Thyroid gland (tissue), 4 donors: ENCODE measurements at regions of chr14 and their contacts with region 1.

Region 1: DNA sequence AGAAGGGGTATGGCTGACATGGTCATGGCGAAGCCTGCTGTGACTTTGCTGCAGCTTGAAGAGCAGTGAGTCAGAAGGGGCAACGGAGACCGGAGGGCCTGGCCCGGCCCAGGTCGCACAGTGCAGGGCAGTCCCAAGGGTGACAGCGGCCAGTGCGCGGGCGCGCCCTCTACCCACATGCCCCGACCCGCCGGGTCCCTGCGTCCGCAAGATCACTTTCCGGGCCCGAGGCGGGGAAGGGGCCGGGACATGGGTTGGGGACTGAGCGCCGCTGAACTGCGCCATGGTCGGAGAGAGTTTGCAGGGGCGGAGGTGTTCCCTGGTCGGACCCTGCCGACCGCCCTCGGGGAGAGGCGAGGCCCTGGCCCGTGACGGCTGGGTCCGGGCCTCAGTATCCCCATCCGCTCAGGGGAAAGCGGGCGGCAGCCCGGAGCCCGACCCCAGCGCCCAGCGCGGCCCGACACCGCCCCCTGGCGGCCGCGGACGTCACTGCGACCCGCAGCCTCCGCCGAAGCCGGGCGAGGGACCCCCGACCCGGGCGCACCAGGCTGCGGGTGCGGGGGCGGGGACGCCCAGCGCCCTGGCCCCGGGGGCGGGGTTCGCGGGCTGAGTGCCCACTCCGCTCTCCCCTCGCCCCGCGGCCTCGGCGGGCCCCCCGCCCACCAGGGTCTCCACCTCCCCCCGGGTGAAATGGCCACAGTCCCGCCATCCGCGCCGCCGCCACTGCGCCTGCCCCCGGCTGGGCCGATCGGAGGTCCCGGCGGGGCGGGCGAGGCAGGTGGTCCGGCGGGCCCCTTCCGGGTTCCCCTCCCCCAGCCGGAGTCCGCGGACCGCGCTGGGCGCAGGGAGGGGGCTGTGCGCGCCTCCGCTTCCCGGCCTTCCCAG is 7.2 kb upstream of the ANKRD9 start:
- DNase-seq: peak; percentile 48 to 50
- H3K4me3 ChIP-seq: peak overlapping the region; percentile 37 to 87 (median 85)
- H3K27ac ChIP-seq: peak overlapping the region in 2 of 3 donors; percentile 61 to 76
- H3K4me1 ChIP-seq: peaks cover 3% of the 10 kb centered on the region in 2 donors
- H3K27me3 ChIP-seq: no peaks in the 10 kb centered on the region
- CTCF ChIP-seq: peak in 5 of 6 experiments; percentile 72 to 100 (median 95)
- POLR2A ChIP-seq: no peak

Region 2: DNA sequence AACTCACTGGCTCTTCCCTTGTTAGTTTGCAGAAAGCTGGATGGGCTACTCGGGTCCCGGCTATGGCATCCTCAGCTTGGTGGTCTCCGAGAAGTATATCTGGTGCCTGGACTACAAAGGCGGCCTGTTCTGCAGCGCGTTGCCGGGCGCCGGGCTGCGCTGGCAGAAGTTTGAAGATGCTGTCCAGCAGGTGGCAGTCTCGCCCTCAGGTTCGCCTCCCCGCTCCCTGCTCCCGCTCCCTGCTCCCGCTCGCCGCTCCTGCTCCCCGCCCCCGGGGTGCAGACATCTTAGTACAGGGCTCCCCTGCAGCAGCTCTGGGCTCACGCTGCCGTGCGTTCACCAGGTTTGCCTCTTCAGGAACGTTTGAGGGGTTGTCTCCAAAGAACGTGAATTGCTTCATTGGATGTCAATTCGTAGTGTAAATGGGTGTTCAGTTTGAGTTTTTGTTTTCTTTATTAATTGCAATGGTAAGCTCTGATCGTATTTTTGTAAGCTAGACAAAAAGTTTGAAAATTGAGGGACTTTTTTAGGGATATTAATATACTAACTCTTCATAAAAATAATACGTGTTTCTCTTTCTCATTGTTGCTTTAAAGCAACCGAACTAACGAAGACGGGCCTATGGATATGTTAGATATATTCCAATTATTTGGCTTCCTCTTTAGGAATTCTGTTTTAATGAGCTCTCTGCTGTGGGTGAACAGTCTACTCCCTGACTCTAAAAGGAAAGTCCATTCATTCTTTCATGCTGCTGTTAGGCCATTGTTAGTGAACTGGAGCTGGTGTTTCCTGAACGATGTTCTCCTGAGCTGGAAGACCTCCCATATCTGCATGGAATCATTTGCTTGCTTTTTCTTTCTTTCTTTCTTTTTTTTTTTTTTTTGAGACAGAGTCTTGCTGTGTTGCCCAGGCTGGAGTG is 78.5 kb before region 1 on chr14:
- intact Hi-C with region 1: loop called (anchors 2 kb)
- DNase-seq: peak; percentile 87 to 89
- H3K4me3 ChIP-seq: no peak overlapping the region
- H3K27ac ChIP-seq: no peak overlapping the region
- H3K4me1 ChIP-seq: no peaks in the 10 kb centered on the region
- H3K27me3 ChIP-seq: no peaks in the 10 kb centered on the region
- CTCF ChIP-seq: peak; percentile 39 to 77 (median 73)
- POLR2A ChIP-seq: no peak

Region 3: GRCh38 chr14:102474934-102475333 is 41.8 kb before region 1 on chr14:
- intact Hi-C with region 1: no loop called
- DNase-seq: peak; percentile 95 to 97
- H3K4me3 ChIP-seq: no peak overlapping the region
- H3K27ac ChIP-seq: peak overlapping the region in 2 of 3 donors; percentile 19 to 23
- H3K4me1 ChIP-seq: peaks cover 11 to 32% of the 10 kb centered on the region in 2 donors
- H3K27me3 ChIP-seq: no peaks in the 10 kb centered on the region
- CTCF ChIP-seq: no peak
- POLR2A ChIP-seq: no peak